Heart right ventricle (tissue), 16 donors: ENCODE measurements at regions of chr22 and their contacts with region 1.

Region 1: GRCh38 chr22:19832476-19833108 is 22.1 kb downstream of the GNB1L start:
- DNase-seq: no peak
- ATAC-seq: no peak
- H3K4me3 ChIP-seq: no peak overlapping the region
- H3K27ac ChIP-seq: no peak overlapping the region
- H3K4me1 ChIP-seq: no peaks in the 10 kb centered on the region
- H3K27me3 ChIP-seq: no peaks in the 10 kb centered on the region
- CTCF ChIP-seq: no peak

Region 2: DNA sequence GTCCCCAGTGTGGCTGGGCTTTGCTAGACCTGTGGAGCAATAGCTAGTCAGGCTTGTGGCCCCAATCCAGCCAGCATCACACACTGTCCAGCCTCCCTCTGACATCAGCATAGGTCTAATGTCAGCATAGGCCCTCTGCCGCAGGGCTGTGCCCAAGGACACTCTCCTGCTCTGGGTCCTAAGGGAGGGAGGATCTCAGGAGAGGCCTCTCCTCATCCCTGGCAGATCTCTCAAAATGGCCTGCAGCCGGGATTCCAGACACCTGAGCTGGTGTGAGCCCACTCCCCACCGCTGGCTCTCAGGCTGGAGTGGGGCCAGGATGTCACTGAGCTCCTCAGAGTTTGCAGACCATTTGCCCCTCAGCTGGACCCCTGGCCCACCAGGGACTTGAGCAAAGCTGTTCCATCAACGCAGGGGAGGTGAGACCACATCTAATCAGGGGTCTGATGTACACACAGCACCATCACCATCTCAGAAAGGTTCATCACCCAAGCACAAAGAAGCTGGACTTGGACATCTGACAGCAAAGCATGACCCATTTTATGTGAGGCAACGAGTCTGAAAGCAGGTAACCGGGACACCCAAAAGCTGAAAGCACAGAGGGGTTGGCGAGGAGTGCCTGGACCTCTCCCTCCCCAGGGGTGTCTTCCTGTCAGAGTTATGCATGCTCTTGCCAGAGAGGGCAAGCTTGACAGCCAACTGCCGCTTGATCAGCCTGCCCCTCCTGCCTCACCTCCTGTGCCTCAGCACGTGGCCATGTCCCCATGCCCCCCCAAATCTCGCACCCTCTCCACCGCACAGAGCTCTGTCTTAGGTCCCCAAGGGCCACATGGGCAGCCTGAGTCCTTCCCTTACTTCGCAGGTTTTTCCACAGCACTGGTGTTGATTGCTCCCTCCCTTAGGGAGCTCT is 188.0 kb before region 1 on chr22:
- intact Hi-C with region 1: no loop called
- DNase-seq: no peak
- ATAC-seq: peak in 4 of 8 donors; percentile 28 to 58 (median 48)
- H3K4me3 ChIP-seq: no peak overlapping the region
- H3K27ac ChIP-seq: no peak overlapping the region
- H3K4me1 ChIP-seq: peaks cover 0 to 5% (median 0%) of the 10 kb centered on the region in 9 donors
- H3K27me3 ChIP-seq: peaks cover 0 to 35% (median 26%) of the 10 kb centered on the region in 7 donors
- CTCF ChIP-seq: no peak

Region 3: GRCh38 chr22:19874307-19875060 is 41.9 kb after region 1 on chr22:
- intact Hi-C with region 1: loop called in 1 of 10 experiments (anchors 5 kb)
- DNase-seq: peak in 1 of 2 donors; percentile 30
- ATAC-seq: peak in 7 of 8 donors; percentile 11 to 63 (median 47)
- H3K4me3 ChIP-seq: no peak overlapping the region
- H3K27ac ChIP-seq: peak overlapping the region in 2 of 10 donors; percentile 7 to 34
- H3K4me1 ChIP-seq: peaks cover 2 to 15% (median 10%) of the 10 kb centered on the region in 9 donors
- H3K27me3 ChIP-seq: no peaks in the 10 kb centered on the region
- CTCF ChIP-seq: no peak

Region 4: DNA sequence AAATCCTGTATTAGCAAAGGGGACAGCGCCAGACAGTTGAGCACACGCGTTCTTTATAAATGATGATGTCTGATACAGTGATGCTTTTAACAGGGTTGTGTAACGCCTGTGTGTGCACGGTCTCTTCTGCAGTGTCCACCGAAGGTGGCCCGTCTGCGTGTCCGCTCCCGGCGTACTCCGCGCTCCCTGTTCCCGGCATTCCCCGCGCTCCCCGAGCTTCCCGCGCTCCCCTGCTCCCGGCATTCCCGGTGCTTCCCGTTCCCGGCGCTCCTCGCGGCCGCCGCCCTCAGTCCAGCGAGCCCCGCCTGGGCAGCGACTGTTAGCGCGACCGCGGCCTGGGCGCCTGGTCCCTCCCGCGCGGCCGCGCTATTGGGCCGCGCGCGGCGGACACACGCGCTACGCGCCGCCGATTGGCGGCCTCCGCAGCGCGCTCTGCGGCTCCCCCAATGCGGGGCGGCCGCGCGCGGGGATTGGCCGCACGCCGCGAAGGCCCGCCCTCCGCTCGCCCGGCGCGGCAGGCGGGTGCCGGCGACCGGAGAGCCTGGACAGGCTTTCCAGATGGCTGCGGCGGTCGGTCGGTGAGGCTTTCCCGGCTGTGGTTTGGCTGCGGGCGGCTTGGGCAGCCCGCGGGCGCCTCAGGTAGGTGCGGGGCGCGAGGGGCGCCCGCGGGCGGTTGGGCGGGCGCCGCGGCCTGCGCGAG is 247.3 kb after region 1 on chr22 and contains the start of gene DGCR8:
- intact Hi-C with region 1: no loop called
- DNase-seq: peak; percentile 95
- ATAC-seq: peak; percentile 96 to 98 (median 97)
- H3K4me3 ChIP-seq: peak within 1 kb of the TSS; percentile 68 to 99 (median 88)
- H3K27ac ChIP-seq: peak within 1 kb of the TSS; percentile 88 to 97 (median 94)
- H3K4me1 ChIP-seq: peaks cover 26 to 53% (median 47%) of the 10 kb centered on the region in 9 donors
- H3K27me3 ChIP-seq: no peaks in the 10 kb centered on the region
- CTCF ChIP-seq: no peak
- total RNA-seq, gene DGCR8: 11.4 to 20.0 (median 14.0) TPM